Posterior cingulate gyrus (tissue), 11 donors: ENCODE measurements at regions of chr7 and their contacts with region 1.

Region 1: DNA sequence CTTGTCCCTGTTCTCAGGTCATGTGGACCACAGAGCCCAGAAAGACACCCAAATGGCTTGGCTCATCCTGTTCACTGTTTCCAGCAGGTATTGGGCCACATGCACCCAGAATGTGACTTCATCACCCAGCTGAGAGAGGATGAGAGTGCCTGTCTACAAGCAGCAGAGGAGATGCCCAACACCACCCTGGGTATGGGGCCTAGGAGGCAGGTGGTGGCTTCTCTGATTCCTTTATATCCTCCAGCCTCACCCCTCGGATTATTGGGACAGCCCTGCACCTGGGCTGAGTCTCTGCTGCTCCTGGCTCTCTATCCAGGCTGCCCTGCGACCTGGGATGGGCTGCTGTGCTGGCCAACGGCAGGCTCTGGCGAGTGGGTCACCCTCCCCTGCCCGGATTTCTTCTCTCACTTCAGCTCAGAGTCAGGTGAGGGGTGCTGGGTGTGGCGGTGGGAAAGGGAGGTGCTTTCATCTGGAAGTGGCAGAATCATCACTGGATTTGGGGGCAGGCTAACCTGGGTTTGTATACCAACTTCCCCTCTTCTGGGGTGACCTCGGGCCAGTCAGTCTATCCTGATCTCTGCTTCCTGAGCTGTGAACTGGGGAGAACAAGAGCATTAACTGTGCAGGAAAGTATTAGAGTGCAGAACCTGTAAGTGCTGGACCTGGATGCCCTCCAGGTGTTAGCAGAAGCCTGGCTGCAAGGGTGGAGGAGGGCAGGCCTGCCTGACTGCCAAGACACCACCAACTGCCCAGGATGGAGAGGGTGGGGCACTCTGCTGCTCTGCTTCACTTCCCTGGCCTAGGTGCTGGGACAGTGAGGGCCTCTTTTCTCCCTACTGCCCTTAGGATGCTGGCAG is 5.2 kb downstream of the GHRHR start:
- DNase-seq: peak in 1 of 10 donors; percentile 63

Region 2: DNA sequence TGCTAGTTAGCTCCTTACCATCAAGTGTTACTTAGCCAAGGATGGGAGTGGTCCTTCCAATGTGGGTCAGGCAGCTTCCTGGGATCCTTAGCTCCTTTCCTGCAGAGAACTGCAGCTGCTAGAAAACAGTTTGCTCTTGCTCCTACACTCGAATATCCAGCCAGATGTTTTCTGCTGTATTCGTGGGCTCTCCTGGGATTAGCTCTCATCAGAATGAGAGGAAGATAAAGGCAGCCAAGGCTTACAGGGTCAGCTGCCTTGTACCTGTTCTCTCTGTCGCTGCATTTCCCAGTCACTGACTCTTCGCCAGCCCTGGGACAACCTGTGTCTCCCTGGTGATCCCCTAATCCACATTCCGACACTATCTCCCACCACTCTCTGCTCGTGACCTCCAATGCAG is 342.6 kb after region 1 on chr7:
- intact Hi-C with region 1: loop called (anchors 5 kb)
- DNase-seq: no peak